CD4-positive, alpha-beta T cell (primary cell): ENCODE measurements at regions of chr3 and their contacts with region 1.

Region 1: GRCh38 chr3:185558395-185558794 is 6.0 kb upstream of the LIPH start:
- DNase-seq: no peak
- ATAC-seq: no peak
- H3K4me3 ChIP-seq: no peak overlapping the region
- H3K4me3 Mint-ChIP-seq: no peak overlapping the region
- H3K27ac ChIP-seq: no peak overlapping the region
- H3K27ac Mint-ChIP-seq: no peak overlapping the region
- H3K4me1 ChIP-seq: peaks cover 16% of the 10 kb centered on the region
- H3K4me1 Mint-ChIP-seq: peaks cover 22% of the 10 kb centered on the region
- H3K27me3 ChIP-seq: peaks cover 0 to 6% of the 10 kb centered on the region in 2 experiments
- H3K27me3 Mint-ChIP-seq: peaks cover 6% of the 10 kb centered on the region
- CTCF ChIP-seq: no peak

Region 2: DNA sequence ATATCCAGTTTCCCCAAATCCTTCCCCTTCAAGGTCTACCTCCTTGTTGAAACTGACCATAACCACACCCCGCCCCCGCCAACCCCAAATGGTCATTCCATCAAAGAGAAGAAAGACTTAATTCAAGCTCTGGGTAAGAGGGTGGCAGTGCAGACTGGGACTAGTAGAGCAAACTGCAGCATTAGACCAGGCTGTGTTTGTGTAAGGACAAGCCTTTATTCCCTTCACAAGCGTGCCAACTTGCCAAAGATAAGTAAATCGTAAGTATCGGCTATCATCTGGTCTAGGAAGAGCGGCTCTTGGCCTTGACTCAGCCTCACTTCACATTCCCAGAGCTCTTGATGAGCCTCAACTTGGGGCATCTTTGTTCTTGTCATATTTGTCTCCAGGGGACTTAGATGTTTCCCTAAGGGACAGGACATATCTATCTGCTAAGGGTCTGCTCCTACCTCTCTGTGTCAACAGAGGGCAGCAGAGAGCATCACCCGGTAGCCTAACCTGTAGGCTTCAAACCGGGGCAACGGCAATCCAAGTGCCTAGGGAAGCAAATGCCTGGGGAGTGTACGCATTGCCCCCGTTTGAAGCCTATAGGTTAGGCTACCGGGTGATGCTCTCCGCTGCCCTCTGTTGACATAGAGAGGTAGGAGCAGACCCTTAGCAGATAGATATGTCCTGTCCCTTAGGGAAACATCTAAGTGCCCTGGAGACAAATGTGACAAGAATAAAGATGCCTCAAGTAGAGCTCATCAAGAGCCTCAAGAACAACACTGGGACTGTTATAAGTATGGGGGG is 204.4 kb before region 1 on chr3:
- CTCF ChIA-PET with region 1: no interaction called
- POLR2A ChIA-PET with region 1: no interaction called
- intact Hi-C with region 1: loop called in 1 of 2 experiments (anchors 5 kb)
- DNase-seq: peak; percentile 24 to 78 (median 48)
- ATAC-seq: peak; percentile 96
- H3K4me3 ChIP-seq: no peak overlapping the region
- H3K4me3 Mint-ChIP-seq: no peak overlapping the region
- H3K27ac ChIP-seq: no peak overlapping the region
- H3K27ac Mint-ChIP-seq: no peak overlapping the region
- H3K4me1 ChIP-seq: no peaks in the 10 kb centered on the region
- H3K4me1 Mint-ChIP-seq: no peaks in the 10 kb centered on the region
- H3K27me3 ChIP-seq: peaks cover 2 to 5% of the 10 kb centered on the region in 2 experiments
- H3K27me3 Mint-ChIP-seq: peaks cover 44% of the 10 kb centered on the region
- CTCF ChIP-seq: peak; percentile 62